Mammary epithelial cell (primary cell): ENCODE measurements at regions of chr2 and their contacts with region 1.

Region 1: GRCh38 chr2:203814661-203815540 is 52.7 kb upstream of the CTLA4 start:
- DNase-seq: peak; percentile 62
- H3K4me3 ChIP-seq: no peak overlapping the region
- H3K27ac ChIP-seq: no peak overlapping the region
- H3K4me1 ChIP-seq: peaks cover 12% of the 10 kb centered on the region
- H3K27me3 ChIP-seq: no peaks in the 10 kb centered on the region
- CTCF ChIP-seq: peak; percentile 80 to 83

Region 2: GRCh38 chr2:202588647-202589581 is 1226.0 kb before region 1 on chr2:
- CTCF ChIA-PET with region 1: no interaction called
- dilution Hi-C with region 1: no loop called
- in situ Hi-C with region 1: no loop called
- intact Hi-C with region 1: loop called (anchors 5 kb)
- DNase-seq: peak; percentile 57
- H3K4me3 ChIP-seq: no peak overlapping the region
- H3K27ac ChIP-seq: no peak overlapping the region
- H3K4me1 ChIP-seq: peaks cover 3% of the 10 kb centered on the region
- H3K27me3 ChIP-seq: no peaks in the 10 kb centered on the region
- CTCF ChIP-seq: peak; percentile 89 to 94

Region 3: GRCh38 chr2:203238704-203239526 is 576.0 kb before region 1 on chr2 and contains the start of gene CYP20A1:
- CTCF ChIA-PET with region 1: no interaction called
- dilution Hi-C with region 1: no loop called
- in situ Hi-C with region 1: loop called in 1 of 2 experiments (anchors 25 kb)
- intact Hi-C with region 1: no loop called
- DNase-seq: peak; percentile 97
- H3K4me3 ChIP-seq: peak within 1 kb of the TSS; percentile 68 to 93 (median 81)
- H3K27ac ChIP-seq: peak within 1 kb of the TSS; percentile 88
- H3K4me1 ChIP-seq: peaks cover 3% of the 10 kb centered on the region
- H3K27me3 ChIP-seq: no peaks in the 10 kb centered on the region
- CTCF ChIP-seq: peak in 1 of 2 donors; percentile 46
- total RNA-seq, gene CYP20A1: 17.6 to 25.0 TPM

Region 4: DNA sequence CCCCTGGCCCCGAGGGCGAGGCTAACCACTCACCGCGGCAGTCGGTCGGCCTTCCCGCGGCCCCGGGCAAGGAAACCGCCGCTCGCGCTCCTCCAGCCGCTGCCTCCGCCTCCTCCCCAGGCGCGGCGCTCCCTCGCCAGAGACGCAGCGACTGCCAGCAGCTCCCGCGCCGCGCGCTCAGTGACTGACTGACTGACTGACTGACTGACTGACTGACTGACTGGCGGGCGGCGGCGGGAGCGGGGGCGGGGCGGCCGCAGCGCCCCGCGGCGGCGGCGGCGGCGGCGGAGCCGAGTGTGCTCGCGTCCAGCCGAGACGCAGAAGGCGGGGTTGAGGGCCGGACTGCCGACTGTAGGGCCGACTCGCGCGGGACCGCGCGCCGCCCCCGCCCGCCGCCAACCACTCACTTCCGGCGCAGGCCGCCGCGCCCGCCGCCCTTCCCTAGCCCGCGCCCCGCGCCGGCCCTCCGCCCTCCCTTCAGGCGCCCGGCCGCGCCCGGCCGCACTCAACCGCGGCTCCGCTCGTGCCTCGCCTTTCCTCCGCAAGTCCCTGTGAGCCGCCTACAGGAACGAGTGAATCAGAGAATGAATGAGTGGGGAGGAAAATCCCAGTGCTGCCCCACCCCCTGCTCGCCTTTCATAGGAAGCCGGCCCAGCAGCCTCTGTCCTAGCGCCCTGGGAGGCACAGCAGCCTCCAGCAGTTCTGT is 279.7 kb before region 1 on chr2 and contains the start of gene RAPH1:
- CTCF ChIA-PET with region 1: no interaction called
- dilution Hi-C with region 1: no loop called
- in situ Hi-C with region 1: no loop called
- intact Hi-C with region 1: loop called (anchors 2 kb)
- DNase-seq: peak; percentile 94
- H3K4me3 ChIP-seq: peak within 1 kb of the TSS; percentile 89 to 96 (median 95)
- H3K27ac ChIP-seq: peak within 1 kb of the TSS; percentile 85
- H3K4me1 ChIP-seq: peaks cover 26% of the 10 kb centered on the region
- H3K27me3 ChIP-seq: no peaks in the 10 kb centered on the region
- CTCF ChIP-seq: no peak
- total RNA-seq, gene RAPH1: 12.5 to 42.2 TPM

Region 5: GRCh38 chr2:203683932-203684556 is 130.9 kb before region 1 on chr2:
- CTCF ChIA-PET with region 1: no interaction called
- dilution Hi-C with region 1: no loop called
- in situ Hi-C with region 1: no loop called
- intact Hi-C with region 1: loop called (anchors 2 kb)
- DNase-seq: peak; percentile 99
- H3K4me3 ChIP-seq: no peak overlapping the region
- H3K27ac ChIP-seq: peak overlapping the region; percentile 97
- H3K4me1 ChIP-seq: peaks cover 72% of the 10 kb centered on the region
- H3K27me3 ChIP-seq: no peaks in the 10 kb centered on the region
- CTCF ChIP-seq: no peak